Prostate gland (tissue), 2 donors: ENCODE measurements at regions of chrX and their contacts with region 1.

Region 1: DNA sequence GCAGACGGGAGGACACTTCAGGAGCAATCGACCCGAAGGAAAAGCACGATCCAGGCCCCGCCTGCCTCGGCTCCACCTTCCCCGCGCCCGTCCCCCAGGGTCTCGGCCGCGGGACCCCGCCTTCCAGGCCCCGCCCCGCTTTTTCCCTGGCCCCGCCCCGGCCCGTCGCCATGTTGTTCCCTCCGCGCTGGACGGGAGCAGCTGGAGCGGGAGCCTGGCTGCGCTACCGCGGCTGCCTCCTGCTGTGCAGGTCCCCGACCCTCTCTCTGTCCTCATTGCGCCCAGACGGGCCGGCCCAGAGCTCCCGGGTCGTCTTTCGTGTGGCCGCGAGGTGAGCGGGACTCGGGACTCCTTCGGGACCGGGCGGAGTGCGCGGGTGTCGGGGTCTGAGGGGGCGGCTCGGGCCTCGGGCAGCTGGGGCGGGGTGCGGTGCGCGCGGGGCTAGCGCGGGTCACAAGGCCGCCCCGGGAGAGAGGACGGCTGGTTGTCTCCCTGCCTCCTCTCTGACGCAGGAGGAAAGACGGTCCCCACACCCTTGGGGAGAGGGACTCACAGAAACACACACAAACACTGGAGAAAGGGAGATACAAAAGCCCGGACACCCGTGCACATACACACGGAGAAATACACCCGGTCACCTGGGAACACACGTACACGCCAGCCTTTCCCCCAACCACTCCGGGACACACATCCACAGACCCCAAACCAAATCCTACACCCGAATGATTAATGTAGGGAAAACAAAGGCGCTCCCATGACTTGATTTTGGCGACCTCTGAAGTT is at the start of gene RAB9A:
- DNase-seq: peak; percentile 77
- H3K4me3 ChIP-seq: peak within 1 kb of the TSS; percentile 56 to 66
- H3K27ac ChIP-seq: peak within 1 kb of the TSS; percentile 90 to 94
- H3K4me1 ChIP-seq: no peaks in the 10 kb centered on the region
- H3K27me3 ChIP-seq: no peaks in the 10 kb centered on the region
- CTCF ChIP-seq: no peak
- POLR2A ChIP-seq: peak; percentile 87
- total RNA-seq, gene RAB9A: 27.3 to 37.7 TPM

Region 2: GRCh38 chrX:12910423-12911121 is 778.6 kb before region 1 on chrX:
- intact Hi-C with region 1: no loop called
- DNase-seq: no peak
- H3K4me3 ChIP-seq: no peak overlapping the region
- H3K27ac ChIP-seq: no peak overlapping the region
- H3K4me1 ChIP-seq: no peaks in the 10 kb centered on the region
- H3K27me3 ChIP-seq: no peaks in the 10 kb centered on the region
- CTCF ChIP-seq: no peak
- POLR2A ChIP-seq: no peak

Region 3: DNA sequence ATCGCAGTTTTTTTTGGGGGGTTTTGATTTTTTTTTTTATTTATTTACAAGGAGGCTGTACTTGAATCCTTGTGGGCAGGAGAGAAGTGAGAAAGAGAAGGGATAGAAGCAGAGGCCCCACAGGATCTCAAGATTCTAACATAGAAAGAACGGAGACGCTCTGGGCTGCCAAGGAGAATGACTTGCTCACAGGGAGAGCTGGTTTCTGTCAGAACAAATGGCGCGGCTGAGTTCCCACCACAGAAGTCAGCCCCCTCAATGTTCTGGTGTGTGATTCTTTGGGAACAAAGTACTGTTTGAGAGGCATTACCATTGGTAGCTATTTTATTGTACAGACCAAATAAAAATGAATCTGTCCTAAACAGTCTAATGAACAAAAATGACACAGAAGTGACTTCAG is 449.9 kb before region 1 on chrX:
- intact Hi-C with region 1: no loop called
- DNase-seq: no peak
- H3K4me3 ChIP-seq: no peak overlapping the region
- H3K27ac ChIP-seq: no peak overlapping the region
- H3K4me1 ChIP-seq: no peaks in the 10 kb centered on the region
- H3K27me3 ChIP-seq: no peaks in the 10 kb centered on the region
- CTCF ChIP-seq: no peak
- POLR2A ChIP-seq: no peak

Region 4: DNA sequence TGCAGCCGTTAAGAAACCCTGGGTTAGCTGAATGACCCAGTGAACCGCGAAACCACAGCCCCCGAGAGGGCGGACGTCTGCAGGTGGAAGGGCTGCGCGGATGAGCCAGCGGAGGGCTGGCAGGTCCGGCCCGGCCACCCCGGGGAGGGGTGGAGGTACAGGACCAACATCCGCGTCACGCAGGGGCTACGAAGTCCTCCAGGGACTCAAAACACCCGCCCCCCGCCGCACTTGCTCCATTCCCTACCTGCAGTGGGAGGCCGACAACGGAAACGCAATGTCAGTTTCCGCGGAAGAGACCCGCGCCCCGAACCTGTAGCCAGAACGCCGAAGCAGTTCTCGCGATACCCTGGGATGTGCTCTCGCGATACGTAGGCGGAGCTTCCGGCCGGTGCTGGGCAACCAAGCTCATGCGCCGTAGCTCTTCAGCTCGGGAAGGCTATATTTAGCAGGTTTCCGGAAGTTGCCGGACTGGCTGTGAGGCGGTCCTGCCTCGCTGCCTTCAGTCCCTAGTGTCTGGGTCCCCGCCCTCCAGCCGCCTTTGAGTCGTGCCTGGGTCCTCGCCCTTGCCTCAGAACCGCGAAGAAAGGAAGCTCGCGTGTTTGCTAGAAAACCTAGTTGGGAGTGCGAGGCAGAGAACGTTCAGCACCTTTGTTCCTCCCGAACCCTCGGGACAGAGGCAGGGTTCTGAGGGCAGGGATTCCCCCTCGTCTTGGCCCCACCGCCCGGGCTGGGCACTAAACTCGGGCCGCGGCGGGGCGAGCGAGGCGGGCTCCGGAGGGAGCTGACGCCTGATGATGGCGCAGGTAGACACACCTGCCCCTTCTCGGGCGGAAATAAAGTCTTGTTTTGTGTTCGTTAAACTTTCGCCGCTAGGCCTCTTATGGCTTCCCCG is 45.4 kb after region 1 on chrX and contains the starts of genes OFD1 and TRAPPC2:
- intact Hi-C with region 1: loop called (anchors 2 kb)
- DNase-seq: peak; percentile 90
- H3K4me3 ChIP-seq: peak within 1 kb of the TSS; percentile 63
- H3K27ac ChIP-seq: peak within 1 kb of the TSS; percentile 89 to 92
- H3K4me1 ChIP-seq: no peaks in the 10 kb centered on the region
- H3K27me3 ChIP-seq: no peaks in the 10 kb centered on the region
- CTCF ChIP-seq: no peak
- POLR2A ChIP-seq: peak; percentile 95
- total RNA-seq, gene OFD1: 23.6 to 36.2 TPM
- total RNA-seq, gene TRAPPC2: 15.6 to 20.2 TPM

Region 5: DNA sequence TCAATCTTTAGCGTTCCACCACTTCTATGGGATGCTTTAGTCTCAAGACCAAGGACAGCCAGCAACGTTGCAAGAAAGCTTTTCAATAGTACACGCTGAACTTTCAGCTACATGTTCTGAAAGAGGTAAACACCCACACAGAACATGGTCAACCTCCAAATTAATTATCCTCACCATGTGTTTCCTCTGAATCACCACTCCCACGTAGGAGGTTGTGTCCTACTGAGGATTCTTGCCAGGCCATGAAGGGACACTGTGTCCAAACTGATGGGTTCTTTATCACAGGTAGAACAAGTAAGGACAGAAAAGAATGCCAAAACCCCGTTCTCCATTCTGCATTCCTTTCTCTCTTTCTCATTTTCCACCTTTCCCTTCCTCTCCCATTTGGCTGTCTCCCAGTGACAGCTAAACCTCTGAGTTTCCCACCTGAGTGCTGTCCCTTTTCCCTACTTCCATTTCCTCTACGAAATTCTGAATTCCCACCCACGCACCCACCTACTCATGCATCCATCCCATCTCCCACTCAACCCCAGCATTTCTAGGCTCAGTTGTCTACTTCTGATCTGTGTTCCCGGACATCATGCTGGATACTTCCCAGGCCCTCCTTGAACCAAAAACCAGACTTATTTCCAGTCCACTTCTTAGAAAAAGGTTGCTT is 156.7 kb after region 1 on chrX:
- intact Hi-C with region 1: no loop called
- DNase-seq: peak; percentile 8
- H3K4me3 ChIP-seq: no peak overlapping the region
- H3K27ac ChIP-seq: no peak overlapping the region
- H3K4me1 ChIP-seq: no peaks in the 10 kb centered on the region
- H3K27me3 ChIP-seq: no peaks in the 10 kb centered on the region
- CTCF ChIP-seq: no peak
- POLR2A ChIP-seq: no peak